AG04449 (cell line): ENCODE measurements at regions of chr3 and their contacts with region 1.

Region 1: DNA sequence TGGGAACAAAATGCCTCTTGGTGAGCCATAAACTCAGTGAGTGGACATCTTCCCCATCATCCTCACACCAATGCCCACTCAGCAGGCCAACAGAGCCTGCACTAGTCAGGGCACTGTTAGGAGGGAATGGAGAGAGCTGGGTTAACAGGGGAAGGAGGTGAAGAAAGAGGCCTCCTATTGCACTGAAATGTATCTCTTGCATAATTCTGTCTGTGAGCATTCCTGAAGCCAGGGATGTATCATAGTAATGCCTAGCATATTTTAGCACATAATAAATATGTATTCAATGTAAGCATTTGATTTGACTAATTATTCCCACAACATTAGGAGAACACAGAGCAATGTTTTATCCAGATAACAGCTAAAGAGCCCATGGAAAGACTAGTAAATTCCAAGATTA is 81.2 kb downstream of the ANO10 start:
- DNase-seq: no peak
- H3K4me3 ChIP-seq: no peak overlapping the region
- CTCF ChIP-seq: no peak

Region 2: GRCh38 chr3:43559963-43560362 is 19.3 kb after region 1 on chr3:
- CTCF ChIA-PET with region 1: interaction called, 30 read pairs
- POLR2A ChIA-PET with region 1: no interaction called
- DNase-seq: no peak
- H3K4me3 ChIP-seq: no peak overlapping the region
- CTCF ChIP-seq: no peak

Region 3: GRCh38 chr3:43742920-43743319 is 202.3 kb after region 1 on chr3:
- CTCF ChIA-PET with region 1: interaction called, 44 read pairs
- POLR2A ChIA-PET with region 1: interaction called, 5 read pairs
- DNase-seq: no peak
- H3K4me3 ChIP-seq: no peak overlapping the region
- CTCF ChIP-seq: peak; percentile 54